CD4-positive, alpha-beta memory T cell (primary cell): ENCODE measurements at regions of chr13 and their contacts with region 1.

Region 1: GRCh38 chr13:32310134-32310706 is 4.9 kb downstream of the ZAR1L start:
- DNase-seq: peak; percentile 41 to 57 (median 49)
- H3K4me3 ChIP-seq: no peak overlapping the region
- H3K4me3 Mint-ChIP-seq: peak overlapping the region in 4 of 8 donors; percentile 12 to 66 (median 42)
- H3K27ac ChIP-seq: no peak overlapping the region
- H3K27ac Mint-ChIP-seq: peak overlapping the region in 1 of 7 donors; percentile 49
- H3K4me1 ChIP-seq: peaks cover 15% of the 10 kb centered on the region
- H3K4me1 Mint-ChIP-seq: peaks cover 13 to 26% (median 16%) of the 10 kb centered on the region in 4 donors
- H3K27me3 ChIP-seq: no peaks in the 10 kb centered on the region
- H3K27me3 Mint-ChIP-seq: no peaks in the 10 kb centered on the region

Region 2: DNA sequence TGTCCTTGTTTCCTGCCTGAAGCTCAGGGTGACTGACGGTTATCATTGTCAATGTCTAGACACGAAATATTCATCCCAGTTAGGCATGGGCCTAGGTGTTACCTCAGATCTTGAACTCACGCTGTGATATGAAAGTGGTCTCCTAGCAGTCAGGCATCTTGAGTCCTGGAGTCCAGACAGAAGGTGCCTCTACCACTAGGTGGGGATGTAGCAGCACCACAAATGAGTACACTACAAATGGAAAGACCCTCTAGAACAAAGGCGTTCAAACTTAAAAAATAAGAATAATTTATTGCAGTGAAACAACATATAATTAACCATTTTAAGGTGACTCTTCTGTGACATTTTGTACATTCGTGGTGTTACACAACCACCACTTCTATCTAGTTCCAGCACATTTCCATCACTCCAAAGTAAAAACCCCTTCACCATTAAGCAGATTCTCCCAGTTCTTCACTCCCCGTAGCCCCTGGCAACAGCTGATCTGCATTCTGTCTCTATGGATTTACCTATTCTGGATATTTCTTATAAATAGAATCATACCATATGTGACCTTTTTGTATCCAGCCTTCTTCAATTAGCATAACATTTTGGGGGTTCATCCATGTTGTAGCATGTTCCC is 290.5 kb before region 1 on chr13:
- CTCF ChIA-PET with region 1: no interaction called
- POLR2A ChIA-PET with region 1: no interaction called
- intact Hi-C with region 1: loop called (anchors 1 kb)
- DNase-seq: peak in 2 of 5 donors; percentile 10 to 15
- H3K4me3 ChIP-seq: no peak overlapping the region
- H3K4me3 Mint-ChIP-seq: no peak overlapping the region
- H3K27ac ChIP-seq: no peak overlapping the region
- H3K27ac Mint-ChIP-seq: peak overlapping the region in 2 of 7 donors; percentile 2 to 49
- H3K4me1 ChIP-seq: no peaks in the 10 kb centered on the region
- H3K4me1 Mint-ChIP-seq: no peaks in the 10 kb centered on the region
- H3K27me3 ChIP-seq: no peaks in the 10 kb centered on the region
- H3K27me3 Mint-ChIP-seq: no peaks in the 10 kb centered on the region

Region 3: DNA sequence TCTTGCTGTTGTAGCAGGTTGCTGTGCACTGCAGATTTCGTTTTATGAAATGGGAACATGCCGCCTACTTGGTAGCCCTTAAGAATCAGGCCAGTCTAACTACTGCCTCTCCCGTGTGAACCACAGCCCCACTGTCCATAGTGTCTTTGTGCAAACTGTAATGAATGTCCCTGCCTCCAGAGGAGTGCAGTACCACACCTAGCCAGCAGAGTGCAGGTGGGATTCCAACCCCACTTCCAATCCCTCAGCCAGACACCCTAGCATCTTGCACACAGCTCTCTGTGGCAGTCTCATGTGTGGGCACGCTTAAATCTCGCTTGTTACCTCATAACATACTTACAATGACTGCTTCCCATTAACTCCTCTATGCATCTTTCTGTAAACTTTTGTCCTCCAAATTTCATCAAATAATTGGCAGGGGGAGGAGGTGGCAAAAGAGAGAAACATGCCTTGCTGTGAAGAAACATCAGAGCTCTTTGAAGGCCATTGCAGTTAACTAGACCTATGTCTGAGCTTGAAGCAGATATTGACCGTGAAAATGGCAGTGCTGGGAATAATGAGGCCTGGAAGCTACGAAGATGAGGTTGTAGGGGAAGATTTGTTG is 42.3 kb before region 1 on chr13:
- CTCF ChIA-PET with region 1: interaction called, 11 read pairs
- POLR2A ChIA-PET with region 1: interaction called, 3 read pairs
- intact Hi-C with region 1: loop called (anchors 1 kb)
- DNase-seq: peak; percentile 26 to 41 (median 40)
- H3K4me3 ChIP-seq: no peak overlapping the region
- H3K4me3 Mint-ChIP-seq: peak overlapping the region in 1 of 8 donors; percentile 55
- H3K27ac ChIP-seq: no peak overlapping the region
- H3K27ac Mint-ChIP-seq: peak overlapping the region in 1 of 7 donors; percentile 61
- H3K4me1 ChIP-seq: no peaks in the 10 kb centered on the region
- H3K4me1 Mint-ChIP-seq: peaks cover 0 to 4% (median 0%) of the 10 kb centered on the region in 4 donors
- H3K27me3 ChIP-seq: no peaks in the 10 kb centered on the region
- H3K27me3 Mint-ChIP-seq: no peaks in the 10 kb centered on the region